Dendritic cell treated with granulocyte-macrophage colony-stimulating factor and Interleukin-4, amounts not matched to agents 40 ng/mL and 50 ng/mL, for 4 days (primary cell): ENCODE measurements at regions of chr1 and their contacts with region 1.

Region 1: DNA sequence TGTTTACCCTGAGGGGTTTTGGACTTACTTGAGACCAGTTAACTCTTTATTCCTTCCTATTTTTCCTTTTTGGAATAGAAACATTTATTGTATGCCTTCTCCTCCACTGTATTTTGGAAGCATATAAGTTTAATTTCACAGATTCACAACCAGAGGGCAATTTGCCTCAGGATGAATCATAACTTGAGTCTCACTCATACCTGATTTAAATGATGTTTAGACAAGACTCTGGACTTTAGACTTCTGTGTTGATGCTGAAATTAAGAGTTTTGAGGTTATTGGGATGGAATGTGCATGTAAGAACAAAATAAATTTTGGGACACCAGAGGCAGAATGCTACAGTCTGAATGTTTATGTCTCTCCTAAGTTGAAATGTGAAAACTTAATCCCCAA is 7.1 kb upstream of the ADAM30 start:
- H3K4me3 Mint-ChIP-seq: no peak overlapping the region
- H3K27ac Mint-ChIP-seq: no peak overlapping the region
- H3K4me1 Mint-ChIP-seq: no peaks in the 10 kb centered on the region
- H3K27me3 Mint-ChIP-seq: no peaks in the 10 kb centered on the region

Region 2: GRCh38 chr1:119882132-119882952 is 21.1 kb before region 1 on chr1:
- intact Hi-C with region 1: loop called (anchors 2 kb)
- H3K4me3 Mint-ChIP-seq: no peak overlapping the region
- H3K27ac Mint-ChIP-seq: no peak overlapping the region
- H3K4me1 Mint-ChIP-seq: peaks cover 3% of the 10 kb centered on the region
- H3K27me3 Mint-ChIP-seq: no peaks in the 10 kb centered on the region